ENCODE measurements at regions of chr19 and their contacts with region 1.

Region 1: DNA sequence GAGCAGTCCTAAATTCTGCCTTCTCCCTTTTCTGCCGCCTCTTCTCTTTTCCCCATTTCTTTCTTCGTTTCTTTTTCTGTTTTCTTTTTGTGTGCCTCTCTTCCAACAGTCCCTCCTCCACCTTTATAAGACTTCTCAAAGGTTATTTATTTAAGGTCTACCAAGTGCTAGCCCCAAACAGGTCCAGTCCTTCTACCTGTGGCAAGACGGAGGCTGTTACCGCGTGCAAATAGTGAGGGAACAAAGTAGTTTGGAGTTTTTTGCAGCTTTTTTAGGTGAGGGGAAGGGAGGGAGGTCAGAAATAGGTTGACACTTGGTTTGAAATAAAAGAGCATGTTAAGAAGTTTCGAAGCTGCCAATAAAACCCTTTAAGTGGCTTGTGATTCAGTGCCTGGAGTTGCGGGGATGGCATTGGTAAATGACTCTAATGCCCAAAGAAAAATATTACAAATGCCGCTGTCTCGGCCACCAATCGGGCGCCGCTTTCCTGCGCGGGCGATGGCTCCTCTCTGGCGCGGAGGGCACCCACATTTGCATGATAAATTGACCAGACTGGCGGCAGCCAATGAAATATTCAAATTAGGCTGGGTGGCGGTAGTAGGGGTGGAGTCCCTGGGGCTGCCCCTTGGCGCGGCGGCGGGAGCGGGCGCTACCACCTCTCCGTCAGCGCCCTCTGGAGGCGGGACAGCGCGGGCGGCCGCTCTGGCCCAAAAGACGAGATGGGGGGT is 7.5 kb upstream of the TSHZ3 start:
- DNase-seq: peak; percentile 42 to 59 (median 43)
- H3K4me3 ChIP-seq: no peak overlapping the region
- H3K4me3 Mint-ChIP-seq: peak overlapping the region in 7 of 8 donors; percentile 31 to 64 (median 48)
- H3K27ac ChIP-seq: no peak overlapping the region
- H3K27ac Mint-ChIP-seq: peak overlapping the region in 2 of 7 donors; percentile 31 to 66
- H3K4me1 ChIP-seq: peaks cover 43% of the 10 kb centered on the region
- H3K4me1 Mint-ChIP-seq: peaks cover 34 to 53% (median 44%) of the 10 kb centered on the region in 4 donors
- H3K27me3 ChIP-seq: peaks cover 51% of the 10 kb centered on the region
- H3K27me3 Mint-ChIP-seq: peaks cover 55 to 68% of the 10 kb centered on the region in 2 donors

Region 2: DNA sequence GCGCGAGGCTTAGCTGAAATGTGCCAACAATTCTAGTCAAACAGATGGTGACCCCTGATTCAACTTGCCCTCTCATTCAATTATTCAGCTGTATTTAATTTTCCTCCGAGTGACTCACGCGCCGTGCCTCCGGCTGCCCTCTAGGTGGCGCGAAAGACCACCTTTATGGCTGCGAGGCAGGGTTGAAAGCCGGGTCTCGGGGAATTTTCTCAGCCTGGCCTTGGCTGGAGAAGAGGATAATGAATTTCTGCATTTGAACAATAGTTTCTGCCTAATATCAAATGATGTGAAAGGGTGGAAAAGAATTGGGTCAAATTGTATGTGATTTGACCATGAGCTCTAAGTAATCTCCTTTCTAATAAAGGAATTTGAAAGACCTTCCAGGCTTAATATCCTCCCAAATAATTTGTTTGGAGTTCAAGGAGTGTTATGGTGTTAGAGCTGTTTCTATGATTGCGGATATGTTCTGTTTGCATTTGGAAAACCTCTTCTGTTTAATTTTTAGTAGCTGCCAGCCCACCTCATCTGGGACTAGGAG is 673.7 kb before region 1 on chr19:
- CTCF ChIA-PET with region 1: interaction called, 16 read pairs
- POLR2A ChIA-PET with region 1: no interaction called
- intact Hi-C with region 1: loop called (anchors 5 kb)
- DNase-seq: peak in 4 of 5 donors; percentile 26 to 41 (median 33)
- H3K4me3 ChIP-seq: no peak overlapping the region
- H3K4me3 Mint-ChIP-seq: no peak overlapping the region
- H3K27ac ChIP-seq: no peak overlapping the region
- H3K27ac Mint-ChIP-seq: no peak overlapping the region
- H3K4me1 ChIP-seq: no peaks in the 10 kb centered on the region
- H3K4me1 Mint-ChIP-seq: peaks cover 0 to 1% (median 0%) of the 10 kb centered on the region in 4 donors
- H3K27me3 ChIP-seq: no peaks in the 10 kb centered on the region
- H3K27me3 Mint-ChIP-seq: peaks cover 23 to 28% of the 10 kb centered on the region in 2 donors

Region 3: DNA sequence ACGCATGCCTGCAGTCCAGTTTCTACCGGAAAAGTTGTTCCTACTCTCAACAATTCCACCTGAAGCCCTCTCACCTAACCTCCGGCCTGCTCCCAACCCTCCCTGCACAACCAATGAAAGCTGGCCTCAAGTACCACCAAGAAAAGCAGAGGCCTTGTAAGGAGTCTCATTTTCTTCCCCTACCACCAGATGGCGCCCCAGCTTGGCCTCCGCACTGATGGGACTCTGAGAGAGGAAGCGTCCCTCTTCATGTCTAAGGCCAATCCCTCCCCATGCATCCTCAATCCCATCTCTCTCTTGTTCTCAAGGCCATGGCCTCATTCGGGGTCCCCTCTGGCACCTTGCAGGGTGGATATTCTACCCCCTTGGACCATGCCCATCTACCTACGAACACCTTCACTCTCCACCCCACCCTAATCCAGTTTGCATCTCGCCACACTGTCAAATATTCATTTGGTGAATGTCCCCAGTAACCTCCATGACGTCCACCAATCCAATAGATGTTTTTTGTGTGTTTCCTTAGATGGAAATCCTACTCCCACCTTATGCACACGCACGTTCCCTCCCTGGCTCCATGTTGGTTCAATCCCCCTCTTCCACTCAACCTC is 571.8 kb before region 1 on chr19:
- CTCF ChIA-PET with region 1: interaction called, 26 read pairs
- POLR2A ChIA-PET with region 1: no interaction called
- intact Hi-C with region 1: no loop called
- DNase-seq: peak; percentile 32 to 52 (median 43)
- H3K4me3 ChIP-seq: no peak overlapping the region
- H3K4me3 Mint-ChIP-seq: no peak overlapping the region
- H3K27ac ChIP-seq: no peak overlapping the region
- H3K27ac Mint-ChIP-seq: no peak overlapping the region
- H3K4me1 ChIP-seq: no peaks in the 10 kb centered on the region
- H3K4me1 Mint-ChIP-seq: no peaks in the 10 kb centered on the region
- H3K27me3 ChIP-seq: no peaks in the 10 kb centered on the region
- H3K27me3 Mint-ChIP-seq: peaks cover 4 to 18% of the 10 kb centered on the region in 2 donors

Region 4: GRCh38 chr19:31054430-31054829 is 302.3 kb before region 1 on chr19:
- CTCF ChIA-PET with region 1: interaction called, 41 read pairs
- POLR2A ChIA-PET with region 1: no interaction called
- intact Hi-C with region 1: no loop called
- DNase-seq: peak in 4 of 5 donors; percentile 24 to 33 (median 28)
- H3K4me3 ChIP-seq: no peak overlapping the region
- H3K4me3 Mint-ChIP-seq: no peak overlapping the region
- H3K27ac ChIP-seq: no peak overlapping the region
- H3K27ac Mint-ChIP-seq: no peak overlapping the region
- H3K4me1 ChIP-seq: no peaks in the 10 kb centered on the region
- H3K4me1 Mint-ChIP-seq: no peaks in the 10 kb centered on the region
- H3K27me3 ChIP-seq: no peaks in the 10 kb centered on the region
- H3K27me3 Mint-ChIP-seq: peaks cover 13 to 29% of the 10 kb centered on the region in 2 donors

Region 5: GRCh38 chr19:31110331-31110730 is 246.4 kb before region 1 on chr19:
- CTCF ChIA-PET with region 1: no interaction called
- POLR2A ChIA-PET with region 1: no interaction called
- intact Hi-C with region 1: loop called (anchors 1 kb)
- DNase-seq: no peak
- H3K4me3 ChIP-seq: no peak overlapping the region
- H3K4me3 Mint-ChIP-seq: no peak overlapping the region
- H3K27ac ChIP-seq: no peak overlapping the region
- H3K27ac Mint-ChIP-seq: no peak overlapping the region
- H3K4me1 ChIP-seq: peaks cover 12% of the 10 kb centered on the region
- H3K4me1 Mint-ChIP-seq: peaks cover 4 to 20% (median 10%) of the 10 kb centered on the region in 4 donors
- H3K27me3 ChIP-seq: peaks cover 3% of the 10 kb centered on the region
- H3K27me3 Mint-ChIP-seq: peaks cover 13 to 17% of the 10 kb centered on the region in 2 donors

Region 6: DNA sequence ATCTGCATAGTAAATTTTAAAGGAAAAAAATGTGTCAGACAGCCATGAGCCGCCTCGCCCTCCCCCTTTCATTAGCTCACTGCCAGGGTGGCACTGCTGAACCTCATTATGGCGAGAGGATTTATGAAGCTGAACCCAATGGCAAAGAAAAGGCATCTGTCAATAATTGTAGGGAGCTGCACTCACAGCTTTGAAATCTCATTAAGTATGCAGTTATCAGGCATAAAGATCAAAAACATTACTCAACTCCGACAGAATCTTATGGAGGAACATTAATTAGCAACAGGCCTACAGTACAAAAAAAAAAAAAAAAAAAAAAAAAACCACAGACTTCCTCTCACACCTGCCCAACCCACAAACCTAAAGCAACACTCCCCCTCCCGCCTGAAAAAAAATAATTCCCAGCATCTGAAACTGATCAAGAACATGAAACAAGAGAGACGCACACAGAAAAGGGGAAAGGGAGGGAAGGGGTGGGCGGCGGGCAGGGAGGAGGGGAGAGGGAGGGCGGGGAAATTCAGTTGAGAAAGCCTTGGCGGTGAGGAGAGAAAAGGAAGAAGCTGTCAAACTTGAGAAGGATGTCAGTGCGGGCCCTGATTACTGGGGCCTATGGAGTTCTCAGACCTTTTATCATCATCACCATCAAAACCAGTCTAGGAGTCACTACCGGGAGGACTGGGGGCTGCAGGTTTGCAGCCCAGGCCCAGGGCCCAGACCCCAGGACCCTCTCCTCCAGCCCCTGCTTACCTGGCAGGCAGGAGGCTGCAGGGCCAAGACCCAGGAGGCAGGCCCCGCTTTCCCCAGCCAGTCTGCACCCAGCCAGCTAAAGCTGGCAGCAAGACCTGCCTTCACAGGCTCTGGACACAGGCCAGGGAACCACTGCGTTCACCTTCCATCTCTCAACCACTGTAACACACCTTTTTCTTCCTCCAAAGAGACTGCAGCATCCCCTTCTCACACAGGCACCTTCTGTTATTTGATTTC is 16.4 kb before region 1 on chr19:
- CTCF ChIA-PET with region 1: interaction called, 7 read pairs
- POLR2A ChIA-PET with region 1: interaction called, 13 read pairs
- intact Hi-C with region 1: no loop called
- DNase-seq: peak; percentile 68 to 79 (median 69)
- H3K4me3 ChIP-seq: peak overlapping the region in 1 of 2 donors; percentile 20
- H3K4me3 Mint-ChIP-seq: peak overlapping the region; percentile 66 to 93 (median 76)
- H3K27ac ChIP-seq: no peak overlapping the region
- H3K27ac Mint-ChIP-seq: peak overlapping the region; percentile 42 to 98 (median 82)
- H3K4me1 ChIP-seq: peaks cover 30% of the 10 kb centered on the region
- H3K4me1 Mint-ChIP-seq: peaks cover 20 to 40% (median 31%) of the 10 kb centered on the region in 4 donors
- H3K27me3 ChIP-seq: peaks cover 6% of the 10 kb centered on the region
- H3K27me3 Mint-ChIP-seq: peaks cover 7 to 10% of the 10 kb centered on the region in 2 donors